Activated CD4-positive, alpha-beta memory T cell treated with anti-CD3 and anti-CD28 coated beads, Interleukin-2, amount 10 ng/mL, durations not matched to agents 7 days and 5 days (primary cell): ENCODE measurements at regions of chr5 and their contacts with region 1.

Region 1: GRCh38 chr5:54517174-54518092 is at the start of gene SNX18:
- DNase-seq: peak; percentile 93
- H3K4me3 Mint-ChIP-seq: peak within 1 kb of the TSS; percentile 92
- H3K27ac Mint-ChIP-seq: peak within 1 kb of the TSS; percentile 56
- H3K4me1 Mint-ChIP-seq: peaks cover 37% of the 10 kb centered on the region
- H3K27me3 Mint-ChIP-seq: peaks cover 24% of the 10 kb centered on the region
- total RNA-seq, gene SNX18: 38.9 to 39.6 TPM

Region 2: DNA sequence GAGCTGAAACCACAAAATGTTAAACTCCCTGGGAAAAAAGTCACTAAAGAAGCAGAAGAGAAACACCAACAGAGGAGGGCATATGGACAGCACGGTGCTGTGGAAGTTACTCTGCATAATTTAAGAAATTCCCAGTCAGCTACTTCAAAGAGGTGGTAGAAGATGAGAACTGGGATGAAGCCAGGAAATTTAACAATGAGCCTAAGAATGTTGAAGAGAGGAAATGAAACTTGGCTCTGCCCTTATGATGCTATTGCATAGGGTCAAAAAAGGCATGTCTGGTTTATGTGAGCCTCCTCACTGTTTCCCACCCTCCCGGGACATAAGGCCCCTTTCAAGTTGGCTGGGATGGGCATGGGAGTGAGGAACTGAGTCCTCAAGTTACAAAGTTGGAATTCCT is 25.3 kb before region 1 on chr5:
- CTCF ChIA-PET with region 1: interaction called, 10 read pairs
- POLR2A ChIA-PET with region 1: interaction called, 3 read pairs
- DNase-seq: no peak
- H3K4me3 Mint-ChIP-seq: no peak overlapping the region
- H3K27ac Mint-ChIP-seq: no peak overlapping the region
- H3K4me1 Mint-ChIP-seq: no peaks in the 10 kb centered on the region
- H3K27me3 Mint-ChIP-seq: peaks cover 9% of the 10 kb centered on the region

Region 3: DNA sequence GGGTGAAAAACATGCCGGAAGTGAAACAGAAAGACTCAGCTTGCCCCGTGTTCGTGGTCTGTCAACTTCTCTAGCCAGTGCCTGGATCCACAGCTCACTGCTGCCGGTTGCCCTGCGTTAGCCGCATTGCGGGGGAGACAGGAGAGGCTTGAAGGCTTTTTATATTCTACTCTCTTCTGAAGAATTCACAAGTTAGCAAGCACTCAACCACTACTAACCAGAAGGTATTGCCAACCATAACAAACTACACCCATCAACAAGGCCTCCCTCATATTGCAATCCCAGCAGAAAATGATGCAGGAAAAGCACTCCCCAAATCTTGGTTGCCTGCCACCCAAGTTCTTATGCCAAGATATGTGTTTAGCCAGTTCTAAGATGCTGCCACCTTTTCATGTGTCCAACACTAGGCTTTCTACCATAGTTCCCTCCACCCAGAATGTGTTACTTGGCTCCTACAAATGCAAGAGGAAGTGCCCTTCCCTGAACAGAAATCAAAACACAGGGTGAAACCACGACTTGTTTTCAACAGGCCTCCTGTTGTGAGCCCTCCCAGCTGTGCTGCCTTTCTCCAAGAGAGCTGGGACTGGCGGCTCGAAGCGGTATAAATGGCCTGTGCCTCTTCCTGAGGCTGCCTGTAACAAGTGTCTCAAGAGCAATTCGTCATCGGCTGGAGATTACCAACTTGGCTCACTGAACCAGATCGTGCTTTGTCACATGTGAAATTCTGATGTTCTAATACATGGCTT is 129.1 kb after region 1 on chr5:
- CTCF ChIA-PET with region 1: interaction called, 21 read pairs
- POLR2A ChIA-PET with region 1: interaction called, 11 read pairs
- DNase-seq: peak; percentile 89
- H3K4me3 Mint-ChIP-seq: peak overlapping the region; percentile 59
- H3K27ac Mint-ChIP-seq: peak overlapping the region; percentile 99
- H3K4me1 Mint-ChIP-seq: peaks cover 55% of the 10 kb centered on the region
- H3K27me3 Mint-ChIP-seq: no peaks in the 10 kb centered on the region

Region 4: GRCh38 chr5:54838843-54839242 is 321.4 kb after region 1 on chr5:
- CTCF ChIA-PET with region 1: interaction called, 132 read pairs
- POLR2A ChIA-PET with region 1: interaction called, 31 read pairs
- DNase-seq: no peak
- H3K4me3 Mint-ChIP-seq: no peak overlapping the region
- H3K27ac Mint-ChIP-seq: no peak overlapping the region
- H3K4me1 Mint-ChIP-seq: peaks cover 10% of the 10 kb centered on the region
- H3K27me3 Mint-ChIP-seq: peaks cover 7% of the 10 kb centered on the region

Region 5: GRCh38 chr5:54852007-54852406 is 334.6 kb after region 1 on chr5:
- CTCF ChIA-PET with region 1: interaction called, 30 read pairs
- POLR2A ChIA-PET with region 1: no interaction called
- DNase-seq: no peak
- H3K4me3 Mint-ChIP-seq: no peak overlapping the region
- H3K27ac Mint-ChIP-seq: no peak overlapping the region
- H3K4me1 Mint-ChIP-seq: no peaks in the 10 kb centered on the region
- H3K27me3 Mint-ChIP-seq: peaks cover 35% of the 10 kb centered on the region

Region 6: DNA sequence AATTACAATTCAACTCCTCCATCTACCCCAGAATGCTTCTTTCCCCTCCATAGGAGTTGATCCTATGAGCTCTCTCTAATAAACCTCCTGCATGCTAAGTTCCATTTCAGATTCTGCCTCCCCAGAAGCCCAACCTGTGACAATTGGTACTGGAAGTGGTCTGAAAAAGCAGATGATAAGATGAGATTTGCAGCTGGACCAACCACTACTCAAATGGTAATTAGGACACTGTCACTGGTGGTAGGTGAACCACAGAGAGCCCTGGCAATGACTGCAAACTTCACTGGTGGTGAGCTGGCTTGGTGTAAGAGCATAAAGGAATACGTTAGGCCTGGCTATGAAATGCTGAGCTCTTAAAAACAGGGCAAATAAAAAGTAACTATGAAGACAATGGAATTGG is 355.4 kb after region 1 on chr5:
- CTCF ChIA-PET with region 1: interaction called, 106 read pairs
- POLR2A ChIA-PET with region 1: interaction called, 19 read pairs
- DNase-seq: no peak
- H3K4me3 Mint-ChIP-seq: no peak overlapping the region
- H3K27ac Mint-ChIP-seq: no peak overlapping the region
- H3K4me1 Mint-ChIP-seq: peaks cover 12% of the 10 kb centered on the region
- H3K27me3 Mint-ChIP-seq: peaks cover 83% of the 10 kb centered on the region